ENCODE measurements at regions of chr2 and their contacts with region 1.

Region 1: GRCh38 chr2:58571181-58571852 is 330.2 kb upstream of the FANCL start:
- DNase-seq: peak; percentile 73
- H3K4me3 Mint-ChIP-seq: no peak overlapping the region
- H3K27ac Mint-ChIP-seq: peak overlapping the region; percentile 54
- H3K4me1 Mint-ChIP-seq: peaks cover 36% of the 10 kb centered on the region
- H3K27me3 Mint-ChIP-seq: no peaks in the 10 kb centered on the region
- CTCF ChIP-seq: peak; percentile 70

Region 2: GRCh38 chr2:58237741-58238140 is 333.6 kb before region 1 on chr2:
- CTCF ChIA-PET with region 1: no interaction called
- intact Hi-C with region 1: loop called (anchors 10 kb)
- DNase-seq: no peak
- H3K4me3 Mint-ChIP-seq: peak overlapping the region; percentile 9
- H3K27ac Mint-ChIP-seq: no peak overlapping the region
- H3K4me1 Mint-ChIP-seq: peaks cover 48% of the 10 kb centered on the region
- H3K27me3 Mint-ChIP-seq: no peaks in the 10 kb centered on the region
- CTCF ChIP-seq: no peak

Region 3: GRCh38 chr2:58680755-58681310 is 109.5 kb after region 1 on chr2:
- CTCF ChIA-PET with region 1: interaction called, 18 read pairs
- intact Hi-C with region 1: loop called (anchors 1 kb)
- DNase-seq: no peak
- H3K4me3 Mint-ChIP-seq: no peak overlapping the region
- H3K27ac Mint-ChIP-seq: no peak overlapping the region
- H3K4me1 Mint-ChIP-seq: peaks cover 8% of the 10 kb centered on the region
- H3K27me3 Mint-ChIP-seq: no peaks in the 10 kb centered on the region
- CTCF ChIP-seq: no peak

Region 4: DNA sequence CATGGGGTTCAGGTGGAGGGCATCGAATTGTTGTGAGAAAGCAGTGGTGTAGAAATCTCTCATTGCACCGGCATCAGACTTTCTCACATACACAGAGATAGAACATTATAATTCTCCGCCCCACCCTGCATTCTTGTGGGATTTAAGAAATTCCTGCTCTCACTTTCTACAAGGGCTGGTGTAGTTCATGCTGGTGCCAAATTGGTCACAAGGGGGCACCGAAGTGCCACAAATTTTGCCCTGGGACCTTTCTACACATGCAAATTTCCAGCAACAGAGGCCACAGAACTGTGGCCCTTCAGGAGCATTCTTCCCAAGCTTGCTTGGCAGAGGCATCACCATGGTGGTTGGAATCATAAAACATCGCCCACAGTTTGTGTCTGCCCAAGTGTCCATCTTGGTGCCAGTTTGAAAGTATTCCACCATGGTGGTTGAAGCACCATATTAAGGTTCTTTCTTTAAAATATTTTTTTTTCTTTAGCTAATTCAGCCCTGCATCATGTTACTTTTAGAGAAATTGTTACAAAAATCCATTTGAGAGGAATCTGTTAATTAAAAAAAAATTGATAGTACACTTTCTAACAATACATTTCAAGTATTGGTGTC is 191.0 kb after region 1 on chr2:
- CTCF ChIA-PET with region 1: no interaction called
- intact Hi-C with region 1: loop called (anchors 1 kb)
- DNase-seq: peak; percentile 79
- H3K4me3 Mint-ChIP-seq: no peak overlapping the region
- H3K27ac Mint-ChIP-seq: no peak overlapping the region
- H3K4me1 Mint-ChIP-seq: peaks cover 5% of the 10 kb centered on the region
- H3K27me3 Mint-ChIP-seq: no peaks in the 10 kb centered on the region
- CTCF ChIP-seq: peak; percentile 71

Region 5: DNA sequence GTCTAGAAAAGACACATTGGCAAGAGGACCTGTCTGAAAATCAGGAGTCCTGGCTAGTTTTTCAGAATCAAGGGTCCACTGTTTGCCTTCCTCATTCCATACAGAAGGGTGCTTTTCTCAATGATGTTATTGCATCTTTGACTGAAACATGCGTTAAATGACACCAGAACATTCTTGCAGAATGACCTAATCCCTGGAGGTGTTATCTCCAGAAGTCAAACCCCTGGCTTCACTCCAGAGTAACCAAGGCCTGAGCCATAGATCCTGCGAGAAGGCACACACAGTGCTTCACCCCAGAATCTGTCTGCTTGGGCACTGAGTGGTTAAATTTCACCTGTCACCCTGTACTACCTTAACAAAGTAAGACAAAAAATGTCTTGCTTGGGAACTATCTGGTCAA is 725.0 kb after region 1 on chr2:
- CTCF ChIA-PET with region 1: no interaction called
- intact Hi-C with region 1: loop called (anchors 10 kb)
- DNase-seq: no peak
- H3K4me3 Mint-ChIP-seq: no peak overlapping the region
- H3K27ac Mint-ChIP-seq: no peak overlapping the region
- H3K4me1 Mint-ChIP-seq: no peaks in the 10 kb centered on the region
- H3K27me3 Mint-ChIP-seq: peaks cover 26% of the 10 kb centered on the region
- CTCF ChIP-seq: no peak

Measured in Calu3 (cell line).